ENCODE measurements at regions of chr2 and their contacts with region 1.

Region 1: GRCh38 chr2:231452799-231453508 is 11.3 kb downstream of the NCL start:
- DNase-seq: no peak
- H3K4me3 ChIP-seq: no peak overlapping the region
- H3K27ac ChIP-seq: no peak overlapping the region
- H3K4me1 ChIP-seq: no peaks in the 10 kb centered on the region
- H3K27me3 ChIP-seq: no peaks in the 10 kb centered on the region
- CTCF ChIP-seq: no peak

Region 2: DNA sequence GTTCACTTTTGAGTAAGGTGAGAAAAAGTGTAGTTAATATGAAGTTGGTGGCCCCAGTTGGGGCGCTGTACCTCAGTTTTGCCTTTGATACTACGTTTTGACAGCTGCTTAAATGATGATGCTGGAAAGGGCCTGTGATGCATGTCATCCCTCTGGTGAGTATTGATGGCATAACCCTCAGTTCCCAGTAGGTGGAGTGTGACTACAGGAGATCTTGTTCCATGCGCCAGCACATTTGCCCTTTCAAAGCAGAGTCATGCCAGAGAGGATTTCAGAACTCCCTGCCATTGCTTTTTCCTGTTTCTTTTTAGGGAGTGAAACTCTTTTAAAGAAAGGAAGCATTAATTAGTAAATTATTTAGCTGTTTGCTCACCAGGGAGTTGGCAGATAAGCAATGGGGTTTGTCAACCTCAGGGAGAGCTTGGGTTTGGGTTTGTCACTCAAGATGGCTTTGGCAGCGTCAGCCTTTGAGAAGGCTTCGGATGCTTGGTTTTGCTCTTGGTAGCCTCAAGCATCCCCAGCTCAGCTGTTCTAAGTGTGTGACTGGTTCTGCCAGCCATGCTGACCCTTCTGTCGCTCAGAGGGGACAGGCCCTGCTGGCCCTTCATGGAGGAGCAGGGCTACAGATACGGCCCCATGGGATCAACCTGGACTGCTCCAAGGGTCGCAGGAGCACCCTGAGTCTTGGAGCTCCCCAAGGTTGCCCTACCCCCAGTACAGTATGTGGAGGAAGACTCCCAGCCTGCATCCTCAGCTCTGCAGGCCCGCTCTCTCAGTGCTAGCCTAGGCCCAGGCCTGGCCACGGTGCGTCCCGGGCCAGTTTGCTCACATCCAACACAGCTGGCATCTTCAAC is 225.4 kb before region 1 on chr2:
- intact Hi-C with region 1: loop called (anchors 5 kb)
- DNase-seq: peak; percentile 78
- H3K4me3 ChIP-seq: no peak overlapping the region
- H3K27ac ChIP-seq: no peak overlapping the region
- H3K4me1 ChIP-seq: peaks cover 12% of the 10 kb centered on the region
- H3K27me3 ChIP-seq: no peaks in the 10 kb centered on the region
- CTCF ChIP-seq: peak; percentile 78

Region 3: GRCh38 chr2:231545105-231545902 is 92.3 kb after region 1 on chr2:
- intact Hi-C with region 1: no loop called
- DNase-seq: peak; percentile 50
- H3K4me3 ChIP-seq: no peak overlapping the region
- H3K27ac ChIP-seq: peak overlapping the region; percentile 54
- H3K4me1 ChIP-seq: no peaks in the 10 kb centered on the region
- H3K27me3 ChIP-seq: no peaks in the 10 kb centered on the region
- CTCF ChIP-seq: no peak

Measured in colonic mucosa (tissue), 4 donors.